ENCODE measurements at regions of chrX and their contacts with region 1.

Region 1: GRCh38 chrX:10615931-10616775 is 4.2 kb downstream of the MID1 start:
- DNase-seq: peak; percentile 69
- ATAC-seq: no peak
- H3K4me3 ChIP-seq: peak overlapping the region; percentile 86
- H3K27ac ChIP-seq: peak overlapping the region; percentile 92
- H3K4me1 ChIP-seq: peaks cover 55% of the 10 kb centered on the region
- H3K27me3 ChIP-seq: no peaks in the 10 kb centered on the region
- CTCF ChIP-seq: peak; percentile 83

Region 2: GRCh38 chrX:9586992-9587392 is 1029.2 kb before region 1 on chrX:
- CTCF ChIA-PET with region 1: no interaction called
- POLR2A ChIA-PET with region 1: no interaction called
- intact Hi-C with region 1: no loop called
- DNase-seq: no peak
- ATAC-seq: no peak
- H3K4me3 ChIP-seq: no peak overlapping the region
- H3K27ac ChIP-seq: no peak overlapping the region
- H3K4me1 ChIP-seq: no peaks in the 10 kb centered on the region
- H3K27me3 ChIP-seq: no peaks in the 10 kb centered on the region
- CTCF ChIP-seq: no peak

Region 3: DNA sequence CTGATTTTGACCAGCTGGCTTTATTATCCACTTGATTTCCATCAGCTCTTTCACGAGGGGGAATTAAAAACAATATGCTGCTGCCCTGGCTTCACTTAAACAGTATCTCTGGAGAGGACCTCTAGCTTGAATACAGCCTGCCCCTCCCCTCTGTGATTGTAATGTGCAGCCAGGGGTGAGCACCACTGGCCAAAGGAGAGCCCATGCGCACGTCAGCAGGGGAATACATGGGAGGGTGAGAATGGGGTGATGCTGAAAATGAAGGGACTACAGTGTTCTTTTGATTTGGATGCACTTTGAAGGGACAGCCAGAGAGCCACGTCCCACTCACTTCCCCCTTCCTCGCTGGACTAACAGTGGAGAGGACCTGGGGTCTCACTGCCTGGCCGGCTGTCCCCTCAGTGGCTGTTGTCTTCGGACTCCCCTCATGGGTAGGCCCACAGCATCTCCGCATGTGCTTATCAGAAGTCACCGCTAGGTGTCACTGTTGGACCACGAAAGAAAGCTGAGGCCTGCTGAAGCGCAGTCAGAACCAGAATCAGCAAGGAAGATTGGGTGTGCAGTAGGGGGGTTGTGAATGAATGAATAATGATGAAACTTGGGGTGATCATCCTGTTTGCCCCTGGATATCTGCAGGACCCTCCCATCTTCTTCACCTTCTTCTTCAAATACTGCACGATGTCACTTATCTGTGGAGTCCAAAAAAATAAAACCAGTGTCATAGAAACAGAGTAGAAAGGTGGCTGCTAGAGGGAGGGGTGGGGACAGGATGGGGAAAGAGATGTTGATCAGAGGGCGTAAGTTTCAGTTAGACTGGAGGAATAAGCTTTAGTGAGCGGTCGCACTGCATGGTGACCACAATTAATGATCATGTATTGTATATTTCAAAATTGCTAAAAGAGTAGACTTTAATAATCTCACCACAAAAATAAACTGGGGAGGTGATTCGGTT is 426.6 kb before region 1 on chrX:
- CTCF ChIA-PET with region 1: interaction called, 7 read pairs
- POLR2A ChIA-PET with region 1: interaction called, 4 read pairs
- intact Hi-C with region 1: loop called (anchors 1 kb)
- DNase-seq: peak; percentile 86
- ATAC-seq: peak; percentile 95
- H3K4me3 ChIP-seq: no peak overlapping the region
- H3K27ac ChIP-seq: peak overlapping the region; percentile 70
- H3K4me1 ChIP-seq: peaks cover 7% of the 10 kb centered on the region
- H3K27me3 ChIP-seq: no peaks in the 10 kb centered on the region
- CTCF ChIP-seq: peak; percentile 84

Region 4: DNA sequence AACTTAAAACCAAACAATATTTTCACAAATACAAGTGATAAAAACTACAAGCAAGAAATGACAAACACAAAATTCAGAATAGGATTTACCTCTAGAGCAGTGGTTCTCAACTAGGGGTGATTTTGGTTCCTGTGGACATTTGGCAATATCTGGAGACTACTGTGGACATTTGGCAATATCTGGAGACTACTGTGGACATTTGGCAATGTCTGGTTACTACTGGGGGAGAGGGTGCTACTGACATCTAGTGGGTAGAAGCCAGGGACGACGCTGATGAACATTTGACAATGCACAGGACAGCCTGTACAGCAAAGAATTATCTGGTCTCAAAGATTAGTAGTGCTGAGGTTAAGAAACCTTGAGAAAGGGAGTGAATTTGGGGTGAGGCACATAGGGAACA is 289.6 kb before region 1 on chrX:
- CTCF ChIA-PET with region 1: no interaction called
- POLR2A ChIA-PET with region 1: no interaction called
- intact Hi-C with region 1: loop called (anchors 10 kb)
- DNase-seq: peak; percentile 52
- ATAC-seq: peak; percentile 77
- H3K4me3 ChIP-seq: no peak overlapping the region
- H3K27ac ChIP-seq: no peak overlapping the region
- H3K4me1 ChIP-seq: peaks cover 9% of the 10 kb centered on the region
- H3K27me3 ChIP-seq: no peaks in the 10 kb centered on the region
- CTCF ChIP-seq: peak; percentile 56

Region 5: DNA sequence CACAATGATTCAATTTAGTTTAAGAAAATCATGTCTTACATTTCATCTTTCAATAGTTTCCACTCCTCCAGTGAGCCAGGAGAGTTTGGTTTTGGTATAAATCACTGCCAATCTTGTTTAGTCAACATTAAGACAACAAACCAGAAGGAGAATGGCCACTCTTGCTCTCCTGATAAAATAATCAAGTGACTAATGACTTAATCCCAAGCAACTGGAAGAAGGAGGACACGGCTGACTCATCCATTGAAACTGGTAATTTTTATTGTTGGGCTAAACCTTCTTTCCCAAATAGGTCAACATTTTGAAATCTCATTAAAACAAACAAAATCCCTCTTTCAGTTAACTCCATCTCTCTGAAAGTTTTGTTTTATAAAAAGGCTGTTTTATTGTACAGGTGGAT is 229.1 kb before region 1 on chrX:
- CTCF ChIA-PET with region 1: no interaction called
- POLR2A ChIA-PET with region 1: no interaction called
- intact Hi-C with region 1: loop called (anchors 10 kb)
- DNase-seq: peak; percentile 75
- ATAC-seq: peak; percentile 79
- H3K4me3 ChIP-seq: no peak overlapping the region
- H3K27ac ChIP-seq: peak overlapping the region; percentile 67
- H3K4me1 ChIP-seq: peaks cover 14% of the 10 kb centered on the region
- H3K27me3 ChIP-seq: no peaks in the 10 kb centered on the region
- CTCF ChIP-seq: no peak

Region 6: GRCh38 chrX:10450229-10450958 is 165.8 kb before region 1 on chrX:
- CTCF ChIA-PET with region 1: no interaction called
- POLR2A ChIA-PET with region 1: no interaction called
- intact Hi-C with region 1: loop called (anchors 5 kb)
- DNase-seq: peak; percentile 84
- ATAC-seq: peak; percentile 70
- H3K4me3 ChIP-seq: no peak overlapping the region
- H3K27ac ChIP-seq: peak overlapping the region; percentile 59
- H3K4me1 ChIP-seq: peaks cover 47% of the 10 kb centered on the region
- H3K27me3 ChIP-seq: no peaks in the 10 kb centered on the region
- CTCF ChIP-seq: no peak

Region 7: GRCh38 chrX:10636337-10636736 is 20.2 kb after region 1 on chrX:
- CTCF ChIA-PET with region 1: interaction called, 4 read pairs
- POLR2A ChIA-PET with region 1: interaction called, 19 read pairs
- intact Hi-C with region 1: loop called (anchors 1 kb)
- DNase-seq: peak; percentile 80
- ATAC-seq: peak; percentile 25
- H3K4me3 ChIP-seq: peak overlapping the region; percentile 51; the same call in 1 of the 2 replicates
- H3K27ac ChIP-seq: peak overlapping the region; percentile 97; the same call in 1 of the 2 replicates
- H3K4me1 ChIP-seq: peaks cover 44% of the 10 kb centered on the region
- H3K27me3 ChIP-seq: no peaks in the 10 kb centered on the region
- CTCF ChIP-seq: peak; percentile 82

Measured in PC-3 (cell line).